ENCODE measurements at regions of chr10 and their contacts with region 1.

Region 1: DNA sequence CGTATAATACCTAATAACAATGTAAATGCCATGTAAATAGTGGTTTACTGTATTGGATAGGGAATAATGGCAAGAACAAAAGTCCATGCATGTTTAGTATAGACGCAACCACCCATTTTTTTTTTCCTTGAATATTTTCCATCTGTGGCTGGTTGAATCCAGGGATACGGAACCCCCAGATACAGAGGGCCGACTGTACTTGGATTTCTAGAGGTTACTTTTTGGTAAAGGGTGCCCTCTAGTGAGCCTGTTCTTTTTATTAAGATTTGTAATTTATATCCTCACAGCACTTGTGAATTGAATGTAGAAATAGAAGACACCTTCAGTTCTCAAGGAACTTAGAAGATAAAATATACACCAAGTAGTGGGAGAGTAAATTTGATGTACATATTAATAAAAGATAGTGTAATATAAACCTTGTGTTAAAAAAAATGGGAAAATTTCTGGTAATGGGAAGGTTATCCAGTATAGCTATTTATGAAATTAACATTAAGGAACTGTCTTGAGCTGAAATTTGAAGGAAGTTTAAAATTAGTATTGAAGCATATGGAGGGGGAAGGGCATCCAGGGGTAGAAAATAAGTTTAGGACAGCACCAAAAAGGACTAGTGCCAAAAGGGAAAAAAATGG is 32.0 kb downstream of the EXOC6 start:
- DNase-seq: peak; percentile 54
- ATAC-seq: peak; percentile 37; the same call in 2 of the 3 replicates
- H3K4me3 ChIP-seq: no peak overlapping the region
- H3K27ac ChIP-seq: no peak overlapping the region
- H3K4me1 ChIP-seq: no peaks in the 10 kb centered on the region
- H3K27me3 ChIP-seq: no peaks in the 10 kb centered on the region
- CTCF ChIP-seq: peak; percentile 61
- EP300 ChIP-seq: no peak
- POLR2A ChIP-seq: no peak
- RAD21 ChIP-seq: peak; percentile 30; the same call in 1 of the 2 replicates

Region 2: GRCh38 chr10:92592761-92593618 is 287.4 kb before region 1 on chr10 and contains the start of gene KIF11:
- CTCF ChIA-PET with region 1: no interaction called
- POLR2A ChIA-PET with region 1: no interaction called
- in situ Hi-C with region 1: no loop called
- intact Hi-C with region 1: loop called (anchors 5 kb)
- DNase-seq: peak; percentile 95
- ATAC-seq: peak; percentile 88
- H3K4me3 ChIP-seq: peak within 1 kb of the TSS; percentile 81 to 91 (median 88)
- H3K27ac ChIP-seq: peak within 1 kb of the TSS; percentile 88
- H3K4me1 ChIP-seq: peaks cover 37% of the 10 kb centered on the region
- H3K27me3 ChIP-seq: no peaks in the 10 kb centered on the region; a peak in 1 of 5 replicates
- CTCF ChIP-seq: peak; percentile 25; the same call in 1 of the 2 replicates
- EP300 ChIP-seq: 0 out of 4 replicates have a peak, but pooled peaks have one; percentile 18 to 35
- POLR2A ChIP-seq: peak; percentile 96 to 97
- RAD21 ChIP-seq: no peak
- total RNA-seq, gene KIF11: 38.4 and 62.8 TPM in 2 replicates

Region 3: DNA sequence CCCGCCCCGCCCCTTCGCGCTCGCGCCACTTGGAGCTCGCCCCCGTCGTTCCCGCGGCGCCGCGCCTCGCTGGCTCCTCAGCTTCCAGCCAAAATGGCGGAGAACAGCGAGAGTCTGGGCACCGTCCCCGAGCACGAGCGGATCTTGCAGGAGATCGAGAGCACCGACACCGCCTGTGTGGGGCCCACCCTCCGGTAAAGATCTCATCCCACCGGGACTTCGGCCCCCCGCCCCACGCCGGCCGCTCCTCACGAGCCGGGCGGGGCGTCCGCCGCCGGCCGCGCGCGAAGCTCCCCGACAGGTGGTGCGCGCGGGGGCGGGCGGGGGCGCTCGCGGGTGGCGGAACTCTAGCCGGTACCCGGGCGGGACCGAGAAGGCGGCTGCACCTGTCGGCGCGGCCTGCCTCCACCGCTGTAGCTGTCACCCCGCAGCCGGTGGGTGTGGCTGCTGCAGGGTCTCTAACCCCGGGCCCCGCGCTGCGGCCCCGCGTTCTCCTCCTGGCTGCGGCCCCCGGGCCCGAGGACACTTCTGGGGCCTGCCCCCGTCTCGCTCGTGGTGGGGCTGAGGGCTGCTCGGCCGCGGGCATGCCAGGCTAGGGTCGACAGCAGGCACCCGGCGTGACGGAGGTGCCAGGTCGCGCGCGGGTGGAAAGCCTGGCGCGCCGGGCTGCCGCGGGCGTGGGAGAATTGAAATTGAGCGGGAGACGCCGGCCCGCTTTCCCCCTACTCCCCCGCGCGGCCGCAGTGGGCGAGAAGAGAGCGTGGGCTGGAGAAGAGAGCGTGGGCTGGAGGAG is 31.7 kb before region 1 on chr10 and contains the start of gene EXOC6:
- CTCF ChIA-PET with region 1: interaction called, 13 read pairs
- POLR2A ChIA-PET with region 1: no interaction called
- in situ Hi-C with region 1: no loop called
- intact Hi-C with region 1: loop called (anchors 1 kb)
- DNase-seq: peak; percentile 63
- ATAC-seq: peak; percentile 87
- H3K4me3 ChIP-seq: peak within 1 kb of the TSS; percentile 94 to 96 (median 95)
- H3K27ac ChIP-seq: peak within 1 kb of the TSS; percentile 81
- H3K4me1 ChIP-seq: peaks cover 37% of the 10 kb centered on the region
- H3K27me3 ChIP-seq: no peaks in the 10 kb centered on the region; a peak in 1 of 5 replicates
- CTCF ChIP-seq: peak; percentile 36; the same call in 1 of the 2 replicates
- EP300 ChIP-seq: no peak
- POLR2A ChIP-seq: peak; percentile 78 to 82
- RAD21 ChIP-seq: peak; percentile 48; the same call in 1 of the 2 replicates
- total RNA-seq, gene EXOC6: 22.2 and 48.7 TPM in 2 replicates

Region 4: GRCh38 chr10:92907280-92907679 is 26.9 kb after region 1 on chr10:
- CTCF ChIA-PET with region 1: no interaction called
- POLR2A ChIA-PET with region 1: no interaction called
- in situ Hi-C with region 1: no loop called
- intact Hi-C with region 1: no loop called
- DNase-seq: no peak
- ATAC-seq: no peak
- H3K4me3 ChIP-seq: no peak overlapping the region
- H3K27ac ChIP-seq: no peak overlapping the region
- H3K4me1 ChIP-seq: peaks cover 24% of the 10 kb centered on the region
- H3K27me3 ChIP-seq: no peaks in the 10 kb centered on the region
- CTCF ChIP-seq: no peak
- EP300 ChIP-seq: no peak
- POLR2A ChIP-seq: no peak
- RAD21 ChIP-seq: no peak

Region 5: GRCh38 chr10:93074147-93074596 is 193.8 kb after region 1 on chr10:
- CTCF ChIA-PET with region 1: interaction called, 4 read pairs
- POLR2A ChIA-PET with region 1: no interaction called
- in situ Hi-C with region 1: no loop called
- intact Hi-C with region 1: loop called (anchors 10 kb)
- DNase-seq: no peak
- ATAC-seq: peak; percentile 39
- H3K4me3 ChIP-seq: peak overlapping the region; percentile 56 to 77 (median 58); a peak in 5 of 6 replicates
- H3K27ac ChIP-seq: no peak overlapping the region
- H3K4me1 ChIP-seq: peaks cover 36% of the 10 kb centered on the region
- H3K27me3 ChIP-seq: peaks cover 11 to 56% of the 10 kb centered on the region in 2 experiments; a peak in 4 of 5 replicates
- CTCF ChIP-seq: peak; percentile 47
- EP300 ChIP-seq: no peak
- POLR2A ChIP-seq: no peak
- RAD21 ChIP-seq: no peak

Region 6: DNA sequence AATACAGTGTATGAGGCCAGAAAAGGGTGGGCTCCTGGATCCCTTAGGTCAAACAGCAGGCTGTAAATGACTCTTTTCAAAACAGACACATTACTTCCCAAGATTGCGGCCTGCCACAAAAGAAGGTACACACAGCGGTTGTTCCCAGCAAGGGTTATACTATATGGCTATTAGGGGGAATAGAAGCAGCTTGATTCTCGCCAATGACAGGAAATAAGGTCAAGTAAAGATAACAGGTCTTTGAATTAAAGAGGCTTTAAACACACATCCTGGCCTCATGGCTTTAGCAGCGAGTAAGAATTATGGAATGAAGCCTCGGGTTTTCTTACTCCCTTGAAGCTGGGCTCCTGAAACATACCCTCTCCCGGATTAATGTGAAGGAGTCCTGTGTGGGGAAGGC is 251.6 kb after region 1 on chr10:
- CTCF ChIA-PET with region 1: no interaction called
- POLR2A ChIA-PET with region 1: no interaction called
- in situ Hi-C with region 1: no loop called
- intact Hi-C with region 1: no loop called
- DNase-seq: no peak
- ATAC-seq: no peak
- H3K4me3 ChIP-seq: no peak overlapping the region
- H3K27ac ChIP-seq: no peak overlapping the region
- H3K4me1 ChIP-seq: no peaks in the 10 kb centered on the region
- H3K27me3 ChIP-seq: 0 out of 5 replicates have a peak, but pooled peaks cover 0 to 14% of the 10 kb centered on the region in 2 experiments
- CTCF ChIP-seq: no peak
- EP300 ChIP-seq: no peak
- POLR2A ChIP-seq: no peak
- RAD21 ChIP-seq: no peak

Measured in HepG2 (cell line).